ENCODE measurements at regions of chr11 and their contacts with region 1.

Region 1: DNA sequence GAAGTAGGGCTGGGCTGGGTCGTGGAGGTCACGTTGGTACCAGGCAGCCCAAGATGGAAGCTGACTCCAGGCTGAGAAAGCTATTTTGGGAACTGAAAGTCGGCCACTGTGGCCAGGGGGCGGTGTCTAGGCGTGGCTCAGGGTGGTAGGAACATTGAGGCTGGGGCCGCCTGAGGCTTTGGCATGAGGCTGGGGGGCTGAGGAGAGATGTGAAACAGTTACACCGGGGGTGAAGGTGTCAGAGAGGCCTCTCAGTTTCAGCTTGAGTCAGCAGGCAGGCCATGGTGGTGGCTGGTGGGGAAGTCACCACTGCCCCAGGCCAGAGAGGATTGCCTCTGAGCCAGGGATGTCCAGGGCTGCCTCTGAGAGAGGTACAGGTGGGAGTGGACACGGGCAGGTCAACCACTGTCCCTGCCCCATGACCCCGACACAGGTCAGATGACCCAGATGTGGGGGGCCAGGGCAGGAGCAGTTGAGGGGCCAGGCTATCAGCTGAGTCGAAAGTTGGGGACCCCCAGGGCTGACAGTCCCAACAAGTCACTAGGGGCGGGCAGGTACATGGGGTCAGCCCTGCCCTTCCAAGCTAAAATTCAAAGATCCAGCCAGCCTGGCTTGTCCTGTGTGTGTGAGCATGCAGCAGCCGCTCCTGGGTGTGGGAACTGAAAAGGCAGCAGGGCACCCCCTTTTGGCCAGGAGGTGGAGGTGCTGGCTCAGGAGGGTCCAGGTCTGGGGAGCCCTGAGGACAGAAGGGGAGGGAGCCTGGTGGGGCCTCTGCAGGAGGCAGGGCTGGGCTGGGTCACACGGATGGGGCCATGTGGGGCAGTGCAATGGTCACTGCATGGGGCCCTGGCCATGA is 7.2 kb downstream of the KCNK7 start:
- DNase-seq: peak; percentile 76 to 85 (median 85)
- H3K4me3 ChIP-seq: peak overlapping the region in 3 of 7 experiments; percentile 25 to 44 (median 38)
- H3K27ac ChIP-seq: peak overlapping the region in 1 of 2 experiments; percentile 49
- H3K4me1 ChIP-seq: peaks cover 0 to 37% (median 28%) of the 10 kb centered on the region in 4 experiments
- H3K27me3 ChIP-seq: no peaks in the 10 kb centered on the region

Region 2: DNA sequence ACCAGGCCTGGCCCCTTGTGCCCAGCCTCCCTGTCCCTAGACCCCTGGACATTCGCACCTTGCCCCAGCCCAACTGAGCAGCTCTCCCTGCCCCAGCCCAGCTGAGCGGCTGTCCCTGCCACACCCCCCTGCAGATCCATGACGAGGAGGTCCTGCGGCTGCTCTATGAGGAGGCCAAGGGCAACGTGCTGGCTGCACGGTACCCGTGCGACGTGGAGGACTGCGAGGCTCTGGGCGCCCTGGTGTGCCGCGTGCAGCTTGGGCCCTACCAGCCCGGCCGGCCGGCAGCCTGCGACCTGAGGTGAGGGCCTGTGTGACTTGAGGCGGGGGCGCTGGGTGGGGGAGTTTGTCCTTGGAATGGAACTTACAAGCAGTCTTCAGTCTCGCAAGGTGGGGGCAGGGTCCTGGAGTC is 194.3 kb before region 1 on chr11:
- CTCF ChIA-PET with region 1: no interaction called
- POLR2A ChIA-PET with region 1: no interaction called
- DNase-seq: no peak
- H3K4me3 ChIP-seq: no peak overlapping the region
- H3K27ac ChIP-seq: no peak overlapping the region
- H3K4me1 ChIP-seq: peaks cover 0 to 15% (median 12%) of the 10 kb centered on the region in 4 experiments
- H3K27me3 ChIP-seq: no peaks in the 10 kb centered on the region

Region 3: DNA sequence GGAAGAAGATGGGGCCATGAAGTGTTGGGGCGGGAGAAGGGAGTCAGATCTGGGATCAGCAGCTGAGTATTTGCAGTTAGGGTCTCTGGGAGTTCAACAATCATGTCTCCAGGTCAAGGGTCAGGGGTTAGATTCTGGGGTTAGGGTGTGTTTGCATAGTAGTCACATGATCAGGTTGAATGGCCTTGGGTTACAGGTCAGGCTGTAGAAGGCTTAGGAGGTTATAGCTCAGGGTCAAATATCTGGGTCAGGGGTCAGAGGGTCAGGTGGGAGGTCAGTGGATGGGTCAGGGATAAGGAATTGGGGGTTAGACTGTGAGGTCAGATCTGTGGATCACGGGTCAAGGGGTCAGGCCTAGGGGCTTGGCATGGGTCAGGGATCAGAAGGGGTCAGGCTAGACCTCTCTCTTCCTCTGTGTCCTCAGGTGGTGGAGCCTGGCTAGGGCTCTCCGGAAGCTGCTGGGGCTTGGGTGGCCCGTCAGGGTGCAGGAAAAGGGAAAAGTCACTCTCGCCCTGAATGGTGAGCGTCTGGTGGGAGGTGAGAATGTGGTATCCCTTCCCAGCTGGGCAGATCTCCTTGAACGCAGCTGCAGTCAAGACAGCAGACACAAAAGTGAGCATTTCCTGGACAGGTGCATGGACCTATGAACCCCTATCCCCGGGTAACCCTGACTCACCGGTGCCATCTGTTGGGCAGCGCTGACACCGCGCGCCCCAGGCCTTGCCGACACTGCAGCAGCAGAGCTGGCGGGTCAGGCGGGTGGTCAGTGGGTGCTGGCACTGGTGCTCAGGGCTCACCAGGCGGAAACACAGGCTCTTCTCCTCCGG is 36.6 kb before region 1 on chr11:
- CTCF ChIA-PET with region 1: interaction called, 262 read pairs
- POLR2A ChIA-PET with region 1: no interaction called
- DNase-seq: peak; percentile 49 to 87 (median 81)
- H3K4me3 ChIP-seq: no peak overlapping the region
- H3K27ac ChIP-seq: no peak overlapping the region
- H3K4me1 ChIP-seq: peaks cover 2 to 78% (median 71%) of the 10 kb centered on the region in 4 experiments
- H3K27me3 ChIP-seq: no peaks in the 10 kb centered on the region

Region 4: DNA sequence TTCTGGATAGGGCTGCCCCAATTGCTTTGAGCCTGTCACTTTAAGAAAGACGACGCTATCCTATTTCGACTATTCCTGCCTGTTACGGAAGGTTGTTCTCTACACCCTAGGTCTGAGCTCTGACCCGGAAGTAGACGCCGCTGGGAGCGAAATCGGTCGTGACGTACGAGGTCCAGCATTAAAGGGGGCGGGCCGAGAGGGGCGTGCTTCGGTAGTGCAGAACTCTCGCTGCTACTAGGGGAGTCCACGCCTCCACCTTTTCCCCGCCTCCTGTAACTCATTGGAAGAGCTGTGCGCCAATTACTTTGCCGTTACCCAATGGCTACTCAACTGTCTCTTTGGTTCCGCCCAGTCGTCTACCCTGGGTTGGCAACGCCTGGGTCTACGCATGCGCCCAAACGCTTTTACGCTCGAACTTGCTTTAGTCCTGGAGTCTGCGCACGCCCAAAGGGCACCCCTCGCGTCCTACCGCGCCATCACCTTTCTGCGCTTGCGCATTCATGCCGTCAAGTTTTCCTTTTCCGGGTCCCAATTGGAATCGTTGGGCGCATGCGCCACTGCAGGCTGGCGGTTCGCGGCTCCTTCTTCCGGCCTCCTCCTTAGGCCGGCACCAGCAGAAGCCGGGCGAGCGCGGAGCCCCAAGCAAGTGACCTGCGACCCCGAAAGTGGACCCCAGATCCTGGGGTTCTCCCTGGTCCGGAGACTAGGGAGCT is 27.0 kb after region 1 on chr11 and contains the start of gene PCNX3:
- CTCF ChIA-PET with region 1: interaction called, 229 read pairs
- POLR2A ChIA-PET with region 1: interaction called, 3 read pairs
- DNase-seq: peak; percentile 100
- H3K4me3 ChIP-seq: peak within 1 kb of the TSS; percentile 73 to 98 (median 86)
- H3K27ac ChIP-seq: peak within 1 kb of the TSS; percentile 82 to 93
- H3K4me1 ChIP-seq: peaks cover 4 to 50% (median 46%) of the 10 kb centered on the region in 4 experiments
- H3K27me3 ChIP-seq: no peaks in the 10 kb centered on the region